ENCODE measurements at regions of chr6 and their contacts with region 1.

Region 1: GRCh38 chr6:7140631-7141378 is 33.0 kb downstream of the RREB1 start:
- DNase-seq: peak in 1 of 2 experiments; percentile 91
- H3K4me3 ChIP-seq: peak overlapping the region; percentile 60 to 68 (median 64)
- H3K27ac ChIP-seq: peak overlapping the region; percentile 68
- H3K4me1 ChIP-seq: peaks cover 18 to 43% (median 29%) of the 10 kb centered on the region in 4 experiments
- H3K27me3 ChIP-seq: no peaks in the 10 kb centered on the region
- CTCF ChIP-seq: no peak
- EP300 ChIP-seq: no peak
- POLR2A ChIP-seq: peak; percentile 26 to 87
- RAD21 ChIP-seq: no peak

Region 2: GRCh38 chr6:7100753-7101081 is 40.1 kb before region 1 on chr6:
- CTCF ChIA-PET with region 1: no interaction called
- POLR2A ChIA-PET with region 1: no interaction called
- DNase-seq: no peak
- H3K4me3 ChIP-seq: no peak overlapping the region
- H3K27ac ChIP-seq: no peak overlapping the region
- H3K4me1 ChIP-seq: peaks cover 0 to 8% (median 3%) of the 10 kb centered on the region in 4 experiments; a peak in 3 of 7 replicates
- H3K27me3 ChIP-seq: peaks cover 0 to 3% (median under 1%) of the 10 kb centered on the region in 4 experiments; a peak in 3 of 7 replicates
- CTCF ChIP-seq: no peak
- EP300 ChIP-seq: no peak
- POLR2A ChIP-seq: no peak
- RAD21 ChIP-seq: no peak

Region 3: GRCh38 chr6:7126754-7127153 is 14.1 kb before region 1 on chr6:
- CTCF ChIA-PET with region 1: interaction called, 4 read pairs
- POLR2A ChIA-PET with region 1: interaction called, 14 read pairs
- DNase-seq: no peak
- H3K4me3 ChIP-seq: no peak overlapping the region
- H3K27ac ChIP-seq: no peak overlapping the region
- H3K4me1 ChIP-seq: peaks cover 0 to 11% (median 5%) of the 10 kb centered on the region in 4 experiments; a peak in 4 of 7 replicates
- H3K27me3 ChIP-seq: no peaks in the 10 kb centered on the region
- CTCF ChIP-seq: no peak
- EP300 ChIP-seq: no peak
- POLR2A ChIP-seq: no peak
- RAD21 ChIP-seq: no peak

Region 4: DNA sequence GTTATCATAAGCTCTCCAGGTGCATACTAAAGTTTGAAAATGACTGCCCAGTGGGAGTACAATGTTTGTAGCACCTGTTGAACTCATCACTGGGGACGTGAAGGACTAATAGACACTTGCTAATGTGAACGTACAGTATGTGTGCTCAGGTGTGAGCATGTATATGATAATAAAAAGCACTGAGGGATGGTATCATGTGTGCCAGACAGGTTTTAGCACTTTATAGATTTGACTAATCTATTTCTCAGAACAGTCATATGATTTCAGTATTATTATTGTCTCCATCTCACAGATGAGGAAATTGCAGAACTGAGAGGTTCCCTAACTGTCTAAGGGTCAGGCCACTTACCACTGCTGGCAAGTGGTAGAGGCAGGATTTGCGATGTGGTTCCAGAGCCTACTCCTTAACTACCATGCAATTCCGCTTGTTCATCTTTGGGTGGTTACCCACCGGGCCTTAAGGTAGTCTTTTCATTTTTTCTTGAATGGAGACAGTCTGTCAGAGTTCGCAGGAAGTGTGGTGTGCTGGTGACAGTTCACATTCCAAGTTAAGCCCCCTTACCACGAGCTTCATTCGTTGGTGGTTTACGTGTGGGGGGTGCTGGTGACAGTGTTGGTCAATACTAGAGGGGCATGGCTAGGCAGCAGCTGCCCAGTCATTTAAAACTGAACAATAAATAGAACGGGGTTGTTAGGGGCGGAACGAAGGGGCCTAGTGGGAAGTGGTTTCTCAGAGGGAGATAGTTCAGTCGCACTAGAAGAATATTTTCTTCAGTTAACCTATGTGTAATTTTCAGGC is 13.7 kb after region 1 on chr6:
- CTCF ChIA-PET with region 1: interaction called, 7 read pairs
- POLR2A ChIA-PET with region 1: interaction called, 34 read pairs
- DNase-seq: peak in 1 of 2 experiments; percentile 35
- H3K4me3 ChIP-seq: no peak overlapping the region
- H3K27ac ChIP-seq: no peak overlapping the region
- H3K4me1 ChIP-seq: peaks cover 4 to 19% (median 11%) of the 10 kb centered on the region in 4 experiments; a peak in 6 of 7 replicates
- H3K27me3 ChIP-seq: no peaks in the 10 kb centered on the region
- CTCF ChIP-seq: no peak
- EP300 ChIP-seq: no peak
- POLR2A ChIP-seq: no peak
- RAD21 ChIP-seq: no peak

Region 5: GRCh38 chr6:7188492-7188891 is 47.7 kb after region 1 on chr6:
- CTCF ChIA-PET with region 1: no interaction called
- POLR2A ChIA-PET with region 1: no interaction called
- DNase-seq: no peak
- H3K4me3 ChIP-seq: no peak overlapping the region
- H3K27ac ChIP-seq: no peak overlapping the region
- H3K4me1 ChIP-seq: no peaks in the 10 kb centered on the region
- H3K27me3 ChIP-seq: no peaks in the 10 kb centered on the region
- CTCF ChIP-seq: no peak
- EP300 ChIP-seq: no peak
- POLR2A ChIP-seq: no peak
- RAD21 ChIP-seq: no peak

Measured in H1 (cell line).